Dendritic cell treated with granulocyte-macrophage colony-stimulating factor and Interleukin-4, amounts not matched to agents 40 ng/mL and 50 ng/mL, for 4 days (primary cell): ENCODE measurements at regions of chr10 and their contacts with region 1.

Region 1: DNA sequence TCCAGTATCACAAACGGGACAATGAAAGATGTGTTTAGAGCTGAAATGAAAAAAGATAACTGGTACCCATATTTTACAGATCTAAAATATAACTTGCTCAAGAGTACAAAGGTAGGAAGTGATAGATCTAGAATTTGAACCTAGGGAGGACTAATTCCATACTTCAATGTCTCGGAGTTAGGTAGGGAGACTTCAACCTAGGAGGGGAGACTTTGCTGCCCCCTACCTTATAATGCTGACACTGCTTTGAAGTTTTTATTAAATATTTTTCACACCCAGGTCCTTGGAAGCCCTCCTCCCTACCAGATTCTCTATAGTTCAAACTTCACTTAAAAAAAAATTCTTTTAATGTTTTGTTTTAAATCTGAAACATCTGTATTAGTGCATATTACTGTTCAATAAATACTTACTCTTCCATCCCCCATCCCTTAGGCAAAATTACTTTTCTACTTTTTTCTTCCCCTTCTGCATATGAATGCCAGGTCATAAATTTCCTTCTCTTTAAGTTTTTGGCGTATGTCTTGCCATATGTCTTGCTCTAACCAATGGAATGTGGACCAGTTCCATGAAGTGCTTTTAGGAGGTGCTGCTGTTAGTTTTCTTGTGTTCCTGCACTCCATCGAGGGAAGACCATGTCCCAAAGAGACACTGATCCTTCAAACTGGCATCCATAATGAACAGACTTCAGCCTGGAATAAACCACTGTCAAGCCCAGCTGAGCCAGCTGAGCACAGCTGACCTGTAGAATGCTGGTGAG is 57.8 kb downstream of the MICU1 start:
- H3K4me3 Mint-ChIP-seq: no peak overlapping the region
- H3K27ac Mint-ChIP-seq: no peak overlapping the region
- H3K4me1 Mint-ChIP-seq: peaks cover 34% of the 10 kb centered on the region
- H3K27me3 Mint-ChIP-seq: no peaks in the 10 kb centered on the region

Region 2: DNA sequence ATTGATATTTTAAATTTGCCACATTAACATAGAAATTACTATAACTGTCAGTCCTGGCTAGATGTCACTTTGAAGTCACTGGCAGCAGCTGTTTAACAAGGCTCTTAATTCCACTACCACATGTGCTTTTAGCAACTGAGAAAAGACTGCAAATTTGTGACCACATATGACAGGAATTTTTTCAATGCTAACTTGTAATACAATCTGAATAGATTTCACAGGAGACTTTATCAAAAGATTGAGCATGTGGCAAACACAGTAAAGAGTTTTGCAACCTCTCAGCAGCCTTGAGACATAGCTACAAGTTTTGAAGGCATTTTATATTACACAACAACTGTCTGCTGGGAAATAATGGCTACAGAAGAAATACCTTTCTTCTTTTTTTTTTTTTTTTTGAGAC is 15.2 kb before region 1 on chr10:
- intact Hi-C with region 1: no loop called
- H3K4me3 Mint-ChIP-seq: no peak overlapping the region
- H3K27ac Mint-ChIP-seq: no peak overlapping the region
- H3K4me1 Mint-ChIP-seq: no peaks in the 10 kb centered on the region
- H3K27me3 Mint-ChIP-seq: no peaks in the 10 kb centered on the region

Region 3: DNA sequence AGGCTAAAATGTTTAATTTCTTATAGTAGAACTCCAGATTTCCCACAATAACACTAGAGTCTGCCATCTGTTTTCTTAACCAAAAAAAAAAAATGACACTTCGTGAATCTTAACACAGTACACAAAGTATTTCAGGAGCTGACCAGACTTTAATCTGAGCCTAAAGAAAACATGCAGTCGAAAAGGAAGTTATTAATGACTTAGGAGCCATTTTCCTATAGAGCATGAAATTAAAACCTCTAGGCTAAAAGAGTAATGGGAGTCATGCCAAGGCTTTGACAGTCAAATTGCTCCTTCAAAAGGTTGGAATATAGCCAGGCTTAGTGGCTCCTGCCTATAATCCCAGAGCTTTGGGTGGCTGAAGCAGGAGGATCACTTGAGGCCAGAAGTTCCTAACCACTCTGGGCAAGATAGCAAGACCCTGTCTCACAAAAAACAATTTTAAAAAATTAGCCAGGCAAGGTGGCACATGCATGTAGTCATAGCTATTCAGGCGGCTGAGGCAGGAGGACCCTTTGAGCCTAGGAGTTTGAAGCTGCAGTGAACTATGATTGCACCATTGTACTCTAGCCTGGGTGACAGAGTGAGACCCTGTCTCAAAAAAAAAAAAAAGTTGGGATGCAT is 44.3 kb after region 1 on chr10:
- intact Hi-C with region 1: loop called (anchors 10 kb)
- H3K4me3 Mint-ChIP-seq: peak overlapping the region; percentile 6
- H3K27ac Mint-ChIP-seq: peak overlapping the region; percentile 34
- H3K4me1 Mint-ChIP-seq: peaks cover 43% of the 10 kb centered on the region
- H3K27me3 Mint-ChIP-seq: no peaks in the 10 kb centered on the region

Region 4: DNA sequence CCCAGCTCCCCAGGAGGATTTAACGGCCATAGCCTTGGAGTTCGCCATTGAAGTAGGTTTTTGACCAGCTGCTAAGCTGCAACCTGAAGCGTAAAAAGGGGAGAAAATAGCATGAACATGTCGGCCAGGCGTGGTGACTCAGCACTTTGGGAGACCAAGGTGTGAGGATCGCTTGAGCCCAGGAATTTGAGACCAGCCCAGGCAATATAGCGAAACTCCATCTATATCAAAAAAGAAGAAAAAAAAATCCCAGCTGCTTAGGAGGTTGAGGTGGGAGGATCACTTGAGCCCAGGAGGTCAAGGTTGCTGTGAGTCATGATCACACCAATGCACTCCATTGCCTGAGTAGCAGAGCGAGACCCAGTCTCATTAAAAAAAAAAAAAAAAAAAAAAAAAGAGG is 91.6 kb after region 1 on chr10:
- intact Hi-C with region 1: no loop called
- H3K4me3 Mint-ChIP-seq: no peak overlapping the region
- H3K27ac Mint-ChIP-seq: no peak overlapping the region
- H3K4me1 Mint-ChIP-seq: no peaks in the 10 kb centered on the region
- H3K27me3 Mint-ChIP-seq: no peaks in the 10 kb centered on the region

Region 5: DNA sequence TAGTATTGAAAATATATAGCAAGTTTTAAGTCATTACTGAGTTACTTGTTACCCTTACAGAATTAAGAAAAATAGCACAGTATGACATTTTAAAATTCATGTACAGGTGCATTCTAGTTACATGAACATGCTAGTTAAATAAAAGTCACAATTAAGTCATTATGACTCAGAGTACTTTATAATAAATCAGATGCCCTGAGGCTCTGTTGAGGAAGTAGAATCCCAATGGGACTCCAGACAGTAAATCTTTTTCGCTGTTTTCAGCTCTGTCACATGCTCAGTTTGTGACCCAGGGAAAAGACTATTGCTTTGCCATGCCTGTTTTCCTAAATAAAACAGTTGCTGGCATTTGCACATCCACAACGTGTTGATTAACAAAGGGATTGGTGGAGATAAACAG is 563.2 kb after region 1 on chr10:
- intact Hi-C with region 1: no loop called
- H3K4me3 Mint-ChIP-seq: no peak overlapping the region
- H3K27ac Mint-ChIP-seq: no peak overlapping the region
- H3K4me1 Mint-ChIP-seq: no peaks in the 10 kb centered on the region
- H3K27me3 Mint-ChIP-seq: no peaks in the 10 kb centered on the region